Posterior vena cava (tissue), 2 donors: ENCODE measurements at regions of chr2 and their contacts with region 1.

Region 1: DNA sequence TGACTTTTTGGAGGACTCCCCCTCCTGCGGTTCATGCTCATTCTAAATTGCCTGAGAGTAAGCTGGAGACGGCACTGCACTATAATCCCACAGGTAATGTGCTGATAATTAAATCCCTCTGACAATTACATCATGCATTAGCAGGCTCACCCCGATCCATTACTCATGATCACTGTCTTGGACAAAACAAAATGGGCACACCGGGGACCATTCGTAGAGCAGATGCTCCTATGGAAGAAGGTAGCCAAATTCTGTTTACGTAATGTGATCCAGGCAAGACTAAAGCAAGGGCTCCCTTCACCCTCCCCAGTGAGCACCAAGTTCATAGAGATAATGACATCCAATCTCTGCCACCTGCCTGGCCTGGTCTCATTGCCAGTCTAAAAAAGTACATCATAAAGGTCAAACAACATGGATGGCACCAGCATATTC is 657.1 kb upstream of the SOX11 start:
- DNase-seq: no peak

Region 2: GRCh38 chr2:5057891-5058351 is 22.8 kb after region 1 on chr2:
- intact Hi-C with region 1: loop called in 1 of 2 experiments (anchors 1 kb)
- DNase-seq: no peak

Region 3: GRCh38 chr2:5392658-5393057 is 357.6 kb after region 1 on chr2:
- intact Hi-C with region 1: no loop called
- DNase-seq: no peak